Aorta (tissue), 5 donors: ENCODE measurements at regions of chr7 and their contacts with region 1.

Region 1: DNA sequence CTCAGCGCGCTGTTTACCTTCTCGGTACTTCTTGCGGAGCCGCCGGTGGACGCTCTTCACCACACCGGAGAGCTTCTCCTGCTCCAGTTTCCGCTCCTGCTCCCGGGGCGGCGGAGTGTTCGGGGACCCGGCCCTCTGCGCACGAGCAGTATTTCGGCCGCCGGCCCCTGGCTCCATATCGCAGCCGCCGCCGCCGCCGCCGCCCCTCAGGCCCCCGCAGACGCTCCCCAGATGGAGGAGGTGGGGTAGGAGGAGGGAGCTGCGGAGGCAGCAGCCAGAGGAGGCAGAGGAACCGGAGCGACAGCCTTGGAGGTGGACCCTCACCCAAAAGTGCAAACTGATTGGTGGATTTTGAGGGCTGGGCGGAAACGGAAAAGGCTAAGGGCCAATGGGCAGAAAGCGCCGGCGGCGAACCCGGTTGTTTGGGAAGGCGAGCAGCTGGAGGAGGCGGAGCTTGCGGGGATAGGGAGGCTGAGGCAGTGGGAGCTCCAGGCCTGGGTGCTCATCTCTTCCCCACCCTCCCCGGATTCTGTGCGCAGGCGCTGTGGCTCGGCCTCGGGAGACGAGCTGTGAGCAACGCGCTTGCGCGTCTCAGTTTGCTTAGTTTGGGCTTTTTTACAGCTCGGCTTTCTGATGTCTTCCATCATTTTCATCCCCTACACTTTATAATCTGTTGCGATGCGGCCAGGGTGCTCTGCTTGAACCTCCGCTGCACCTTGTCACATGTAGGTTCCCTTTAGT is 146.9 kb downstream of the GPR85 start:
- DNase-seq: peak; percentile 100
- ATAC-seq: peak; percentile 100
- H3K4me3 ChIP-seq: peak overlapping the region; percentile 91
- H3K27ac ChIP-seq: peak overlapping the region in 1 of 2 donors; percentile 70
- H3K4me1 ChIP-seq: peaks cover 3 to 5% of the 10 kb centered on the region in 2 donors
- H3K27me3 ChIP-seq: no peaks in the 10 kb centered on the region

Region 2: GRCh38 chr7:111605246-111605645 is 1334.5 kb before region 1 on chr7:
- intact Hi-C with region 1: no loop called
- DNase-seq: no peak
- ATAC-seq: no peak
- H3K4me3 ChIP-seq: no peak overlapping the region
- H3K27ac ChIP-seq: no peak overlapping the region
- H3K4me1 ChIP-seq: no peaks in the 10 kb centered on the region
- H3K27me3 ChIP-seq: no peaks in the 10 kb centered on the region

Region 3: DNA sequence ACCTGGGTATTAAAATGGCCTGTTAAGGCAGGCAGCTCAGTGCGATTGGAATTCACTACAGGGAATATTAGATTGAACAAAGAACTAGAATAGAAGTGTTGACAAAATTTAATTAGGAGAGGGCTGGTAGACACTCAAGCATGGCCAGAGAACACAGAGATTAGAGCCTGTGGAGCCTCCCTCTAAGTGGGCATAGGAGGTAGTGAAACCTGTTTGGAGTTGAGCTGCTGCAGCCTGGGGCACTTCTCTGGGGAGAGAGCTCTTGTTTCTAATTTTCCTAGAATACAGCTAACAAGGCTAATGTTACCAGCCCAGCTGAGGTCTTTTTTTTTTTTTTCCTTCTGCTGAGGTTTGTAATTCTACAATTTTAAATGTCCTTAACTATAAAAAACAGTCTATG is 195.9 kb before region 1 on chr7:
- intact Hi-C with region 1: no loop called
- DNase-seq: no peak
- ATAC-seq: no peak
- H3K4me3 ChIP-seq: no peak overlapping the region
- H3K27ac ChIP-seq: no peak overlapping the region
- H3K4me1 ChIP-seq: no peaks in the 10 kb centered on the region
- H3K27me3 ChIP-seq: peaks cover 0 to 2% of the 10 kb centered on the region in 2 donors

Region 4: GRCh38 chr7:112789817-112790585 is 149.7 kb before region 1 on chr7 and contains the start of gene TMEM168:
- intact Hi-C with region 1: loop called in 1 of 2 experiments (anchors 5 kb)
- DNase-seq: peak; percentile 84 to 95
- ATAC-seq: peak; percentile 94
- H3K4me3 ChIP-seq: peak within 1 kb of the TSS; percentile 65 to 79
- H3K27ac ChIP-seq: peak within 1 kb of the TSS in 1 of 2 donors; percentile 35
- H3K4me1 ChIP-seq: peaks cover 4 to 7% of the 10 kb centered on the region in 2 donors
- H3K27me3 ChIP-seq: no peaks in the 10 kb centered on the region
- total RNA-seq, gene TMEM168: 23.2 to 32.8 TPM

Region 5: DNA sequence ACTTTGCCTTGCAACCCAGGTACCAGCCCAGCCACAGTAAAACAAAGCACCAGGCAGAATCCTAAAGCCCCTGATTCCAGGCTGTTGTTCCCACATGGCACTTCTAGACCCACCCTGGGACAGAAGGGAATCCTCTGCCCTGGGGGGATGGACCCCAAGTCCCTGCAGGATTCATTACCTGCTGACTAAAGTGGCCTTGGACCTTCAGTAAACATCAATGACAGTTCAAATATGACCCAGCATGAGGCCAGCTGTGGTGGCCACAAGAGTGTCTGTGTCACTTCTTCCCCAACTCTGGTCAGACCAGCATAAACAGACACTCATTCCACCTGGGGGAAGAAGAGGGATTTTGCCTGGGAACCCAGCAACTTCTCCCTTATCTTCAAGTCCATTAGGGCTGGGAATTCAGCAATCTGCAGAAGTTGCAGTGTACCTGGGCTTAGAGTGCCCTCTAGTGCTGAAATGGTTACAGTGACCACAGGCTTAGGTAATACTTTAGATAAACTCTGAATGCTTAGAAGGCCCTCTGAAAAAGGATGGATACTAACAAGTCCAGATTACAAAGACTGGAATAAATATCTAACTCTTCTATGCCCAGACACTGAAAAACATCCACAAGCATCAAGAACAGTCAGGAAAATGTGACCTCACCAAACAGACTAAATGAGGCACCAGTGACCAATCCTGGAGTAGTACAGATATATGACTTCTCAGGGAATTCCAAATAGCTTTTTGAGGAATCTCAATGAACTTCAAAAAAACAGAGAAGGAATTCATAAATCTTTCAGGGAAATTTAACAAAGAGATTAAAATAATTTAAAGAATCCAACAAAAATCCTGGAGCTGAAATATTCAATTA is 41.1 kb before region 1 on chr7:
- intact Hi-C with region 1: loop called in 1 of 2 experiments (anchors 5 kb)
- DNase-seq: no peak
- ATAC-seq: no peak
- H3K4me3 ChIP-seq: no peak overlapping the region
- H3K27ac ChIP-seq: no peak overlapping the region
- H3K4me1 ChIP-seq: no peaks in the 10 kb centered on the region
- H3K27me3 ChIP-seq: no peaks in the 10 kb centered on the region

Region 6: DNA sequence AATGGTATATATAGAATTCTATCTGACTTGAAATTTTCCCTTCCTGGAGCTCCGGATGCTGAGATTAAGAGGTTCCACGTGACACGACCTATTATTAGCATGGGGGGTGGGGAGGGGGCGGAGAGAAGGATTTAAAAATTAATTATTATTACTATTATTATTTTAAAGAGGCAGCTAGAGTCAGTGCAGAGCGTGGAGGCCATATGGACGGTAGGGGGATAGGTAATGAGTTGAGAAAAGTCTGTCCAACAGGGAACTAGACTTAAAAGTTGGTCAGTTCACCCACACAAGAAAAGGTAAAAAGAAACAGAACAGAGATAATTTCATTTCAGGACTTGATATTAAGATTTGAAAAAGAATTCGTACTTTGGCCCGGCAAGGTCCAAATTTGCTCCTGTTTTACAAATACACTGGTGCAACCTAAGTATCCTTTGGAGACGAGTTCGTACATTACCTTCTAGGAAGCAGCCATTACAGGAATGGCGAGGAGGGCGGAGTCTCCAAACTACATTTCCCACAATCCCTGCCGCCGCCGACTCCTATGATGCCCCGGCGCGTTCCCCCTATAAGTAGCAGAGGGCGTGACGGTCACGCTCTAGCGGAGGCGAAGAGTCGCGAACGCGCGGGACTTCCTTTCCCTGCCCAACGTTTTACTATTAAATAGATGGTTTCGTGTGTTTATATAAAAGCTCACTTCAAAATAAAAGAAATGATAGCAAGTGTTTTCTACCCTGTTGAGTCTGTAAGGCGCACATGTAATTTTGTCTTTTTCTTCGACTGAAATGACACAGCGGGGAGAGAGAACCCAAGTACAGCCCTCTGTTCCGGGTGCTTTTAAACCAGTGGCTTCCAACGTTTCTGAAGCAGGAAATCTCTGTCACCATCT is 178.6 kb after region 1 on chr7 and contains the start of gene SMIM30:
- intact Hi-C with region 1: loop called (anchors 10 kb)
- DNase-seq: peak; percentile 96
- ATAC-seq: peak; percentile 99
- H3K4me3 ChIP-seq: peak within 1 kb of the TSS; percentile 53 to 97
- H3K27ac ChIP-seq: peak within 1 kb of the TSS in 1 of 2 donors; percentile 33
- H3K4me1 ChIP-seq: no peaks in the 10 kb centered on the region
- H3K27me3 ChIP-seq: no peaks in the 10 kb centered on the region
- total RNA-seq, gene SMIM30: 31.6 to 33.5 TPM